CD14-positive monocyte (primary cell): ENCODE measurements at regions of chr20 and their contacts with region 1.

Region 1: GRCh38 chr20:37095599-37096414 is at the start of gene RBL1:
- DNase-seq: peak; percentile 62 to 70 (median 70)
- H3K4me3 ChIP-seq: peak within 1 kb of the TSS; percentile 68 to 87 (median 78)
- H3K4me3 Mint-ChIP-seq: peak within 1 kb of the TSS; percentile 99
- H3K27ac ChIP-seq: peak within 1 kb of the TSS; percentile 23 to 86
- H3K27ac Mint-ChIP-seq: peak within 1 kb of the TSS; percentile 91 to 100 (median 99)
- H3K4me1 ChIP-seq: peaks cover 16 to 25% of the 10 kb centered on the region in 2 donors
- H3K4me1 Mint-ChIP-seq: peaks cover 21% of the 10 kb centered on the region
- H3K27me3 ChIP-seq: no peaks in the 10 kb centered on the region
- H3K27me3 Mint-ChIP-seq: peaks cover 0 to 2% (median 0%) of the 10 kb centered on the region in 3 donors
- CTCF ChIP-seq: no peak
- polyA plus RNA-seq, gene RBL1: 1.5 to 3.7 (median 2.4) TPM

Region 2: DNA sequence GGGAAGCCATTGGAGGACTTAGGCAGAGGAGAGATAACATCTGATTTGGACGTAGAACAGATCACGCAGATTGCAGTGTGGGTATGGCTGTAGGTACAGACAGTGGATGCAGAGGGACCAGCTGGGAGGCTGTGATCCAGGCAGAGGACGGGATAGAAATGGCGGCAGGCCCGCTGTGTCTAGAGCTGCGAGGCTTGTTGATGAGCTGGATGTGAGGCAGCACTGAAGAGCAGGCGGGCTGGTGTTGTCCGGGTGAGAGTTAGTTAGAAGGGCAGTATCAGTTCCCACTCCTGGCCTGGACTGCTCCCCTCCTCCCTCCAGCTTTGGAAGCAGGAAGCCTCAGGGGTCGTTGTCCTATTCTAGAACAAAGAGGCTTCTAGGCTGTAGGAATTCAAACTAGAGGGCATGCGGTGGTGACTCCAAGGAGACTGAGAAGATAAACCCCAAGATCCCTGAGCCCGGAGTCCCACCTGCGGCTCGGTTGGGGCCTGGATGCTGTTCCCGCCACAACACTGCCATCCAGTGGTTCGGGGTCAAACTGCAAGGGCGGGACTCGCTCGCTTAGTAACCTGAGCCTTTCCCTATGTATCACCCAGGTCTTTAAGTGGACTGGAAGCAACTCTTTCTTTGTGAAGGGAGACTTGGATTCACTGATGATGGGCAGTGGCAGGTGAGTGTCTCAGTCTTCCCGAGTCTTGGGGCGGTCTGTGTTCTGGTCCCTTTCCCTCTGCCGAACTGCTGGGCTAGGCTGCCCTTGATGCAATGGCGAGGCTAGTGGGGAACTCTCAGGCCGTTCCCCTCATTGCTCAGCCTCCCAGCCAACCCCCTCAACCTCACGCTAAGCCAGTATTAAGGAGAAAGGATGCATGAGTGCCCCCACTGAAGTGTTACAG is 208.7 kb before region 1 on chr20:
- intact Hi-C with region 1: no loop called
- DNase-seq: peak; percentile 57 to 66 (median 60)
- H3K4me3 ChIP-seq: no peak overlapping the region
- H3K4me3 Mint-ChIP-seq: no peak overlapping the region
- H3K27ac ChIP-seq: peak overlapping the region; percentile 48 to 55
- H3K27ac Mint-ChIP-seq: peak overlapping the region; percentile 50 to 87 (median 72)
- H3K4me1 ChIP-seq: peaks cover 9 to 12% of the 10 kb centered on the region in 2 donors
- H3K4me1 Mint-ChIP-seq: peaks cover 25% of the 10 kb centered on the region
- H3K27me3 ChIP-seq: no peaks in the 10 kb centered on the region
- H3K27me3 Mint-ChIP-seq: peaks cover 0 to 1% (median 0%) of the 10 kb centered on the region in 3 donors
- CTCF ChIP-seq: peak; percentile 93

Region 3: GRCh38 chr20:36908603-36909002 is 187.2 kb before region 1 on chr20:
- intact Hi-C with region 1: no loop called
- DNase-seq: no peak
- H3K4me3 ChIP-seq: no peak overlapping the region
- H3K4me3 Mint-ChIP-seq: no peak overlapping the region
- H3K27ac ChIP-seq: no peak overlapping the region
- H3K27ac Mint-ChIP-seq: no peak overlapping the region
- H3K4me1 ChIP-seq: no peaks in the 10 kb centered on the region
- H3K4me1 Mint-ChIP-seq: no peaks in the 10 kb centered on the region
- H3K27me3 ChIP-seq: no peaks in the 10 kb centered on the region
- H3K27me3 Mint-ChIP-seq: no peaks in the 10 kb centered on the region
- CTCF ChIP-seq: no peak

Region 4: GRCh38 chr20:36957875-36958667 is 137.7 kb before region 1 on chr20:
- intact Hi-C with region 1: loop called in 1 of 2 experiments (anchors 5 kb)
- DNase-seq: peak; percentile 87 to 94 (median 90)
- H3K4me3 ChIP-seq: peak overlapping the region in 1 of 3 experiments; percentile 51
- H3K4me3 Mint-ChIP-seq: peak overlapping the region; percentile 44 to 55
- H3K27ac ChIP-seq: peak overlapping the region; percentile 67 to 80
- H3K27ac Mint-ChIP-seq: peak overlapping the region; percentile 89 to 95 (median 93)
- H3K4me1 ChIP-seq: peaks cover 71 to 82% of the 10 kb centered on the region in 2 donors
- H3K4me1 Mint-ChIP-seq: peaks cover 64% of the 10 kb centered on the region
- H3K27me3 ChIP-seq: no peaks in the 10 kb centered on the region
- H3K27me3 Mint-ChIP-seq: peaks cover 0 to 4% (median 0%) of the 10 kb centered on the region in 3 donors
- CTCF ChIP-seq: no peak

Region 5: DNA sequence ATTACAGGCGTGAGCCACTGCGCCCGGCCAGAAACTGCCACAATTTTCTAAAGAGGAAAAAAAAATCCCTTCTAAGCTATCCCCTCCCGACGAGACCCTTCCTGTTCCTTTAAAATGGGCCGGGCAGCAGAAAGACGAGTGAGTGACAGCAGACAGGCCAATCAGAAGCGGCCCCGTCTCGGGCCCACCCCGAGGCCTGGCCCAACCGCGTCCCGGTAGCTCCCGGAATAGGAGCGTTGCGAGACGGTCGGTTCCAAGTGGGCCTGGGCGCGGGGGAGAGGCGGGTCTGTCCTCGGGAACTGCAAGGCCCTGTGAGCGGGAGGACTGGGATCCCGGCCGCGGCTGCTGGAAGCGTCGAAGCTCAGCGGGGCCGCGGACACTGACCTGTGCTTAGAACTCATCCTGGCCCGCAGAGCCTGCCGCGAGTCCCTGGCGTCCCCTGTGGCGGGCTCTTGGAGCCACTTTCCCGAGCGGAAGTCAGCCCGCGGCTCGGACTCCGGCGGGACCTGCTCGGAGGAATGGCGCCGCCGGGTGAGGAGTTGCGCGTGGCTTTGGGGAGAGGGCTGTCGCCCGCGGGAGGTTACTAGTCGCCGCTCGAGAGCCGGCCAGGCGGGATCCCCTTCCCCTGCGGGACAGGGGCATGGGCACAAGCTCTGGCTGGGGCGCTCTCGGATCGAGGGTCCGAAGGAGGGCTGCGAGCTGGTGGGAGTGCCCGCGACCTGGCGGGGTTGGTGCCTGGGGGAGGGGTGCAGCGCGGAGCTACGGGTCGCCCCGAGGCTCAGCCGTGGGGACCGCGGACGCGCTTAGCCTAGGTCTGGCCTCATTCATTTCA is 83.2 kb after region 1 on chr20 and contains the starts of genes MROH8 and RPN2:
- intact Hi-C with region 1: loop called in 1 of 2 experiments (anchors 10 kb)
- DNase-seq: peak; percentile 94 to 96 (median 95)
- H3K4me3 ChIP-seq: peak within 1 kb of the TSS; percentile 58 to 99 (median 88)
- H3K4me3 Mint-ChIP-seq: peak within 1 kb of the TSS; percentile 96 to 97
- H3K27ac ChIP-seq: peak within 1 kb of the TSS; percentile 97
- H3K27ac Mint-ChIP-seq: peak within 1 kb of the TSS; percentile 97 to 100 (median 99)
- H3K4me1 ChIP-seq: peaks cover 17 to 30% of the 10 kb centered on the region in 2 donors
- H3K4me1 Mint-ChIP-seq: peaks cover 25% of the 10 kb centered on the region
- H3K27me3 ChIP-seq: no peaks in the 10 kb centered on the region
- H3K27me3 Mint-ChIP-seq: no peaks in the 10 kb centered on the region
- CTCF ChIP-seq: no peak
- polyA plus RNA-seq, gene MROH8: 0.08 to 1.0 (median 0.52) TPM
- polyA plus RNA-seq, gene RPN2: 169 to 215 (median 199) TPM